CD8-positive, alpha-beta memory T cell (primary cell): ENCODE measurements at regions of chr6 and their contacts with region 1.

Region 1: GRCh38 chr6:136792410-136793262 is at the start of gene MAP3K5:
- DNase-seq: peak; percentile 88 to 96 (median 92)
- H3K4me3 ChIP-seq: peak within 1 kb of the TSS; percentile 99
- H3K4me3 Mint-ChIP-seq: peak within 1 kb of the TSS; percentile 94 to 99 (median 98)
- H3K27ac ChIP-seq: peak within 1 kb of the TSS; percentile 94
- H3K27ac Mint-ChIP-seq: peak within 1 kb of the TSS; percentile 94 to 99 (median 96)
- H3K4me1 ChIP-seq: peaks cover 39% of the 10 kb centered on the region
- H3K4me1 Mint-ChIP-seq: peaks cover 34 to 43% (median 41%) of the 10 kb centered on the region in 3 donors
- H3K27me3 ChIP-seq: no peaks in the 10 kb centered on the region
- H3K27me3 Mint-ChIP-seq: no peaks in the 10 kb centered on the region
- total RNA-seq, gene MAP3K5: 12.6 to 12.9 TPM

Region 2: DNA sequence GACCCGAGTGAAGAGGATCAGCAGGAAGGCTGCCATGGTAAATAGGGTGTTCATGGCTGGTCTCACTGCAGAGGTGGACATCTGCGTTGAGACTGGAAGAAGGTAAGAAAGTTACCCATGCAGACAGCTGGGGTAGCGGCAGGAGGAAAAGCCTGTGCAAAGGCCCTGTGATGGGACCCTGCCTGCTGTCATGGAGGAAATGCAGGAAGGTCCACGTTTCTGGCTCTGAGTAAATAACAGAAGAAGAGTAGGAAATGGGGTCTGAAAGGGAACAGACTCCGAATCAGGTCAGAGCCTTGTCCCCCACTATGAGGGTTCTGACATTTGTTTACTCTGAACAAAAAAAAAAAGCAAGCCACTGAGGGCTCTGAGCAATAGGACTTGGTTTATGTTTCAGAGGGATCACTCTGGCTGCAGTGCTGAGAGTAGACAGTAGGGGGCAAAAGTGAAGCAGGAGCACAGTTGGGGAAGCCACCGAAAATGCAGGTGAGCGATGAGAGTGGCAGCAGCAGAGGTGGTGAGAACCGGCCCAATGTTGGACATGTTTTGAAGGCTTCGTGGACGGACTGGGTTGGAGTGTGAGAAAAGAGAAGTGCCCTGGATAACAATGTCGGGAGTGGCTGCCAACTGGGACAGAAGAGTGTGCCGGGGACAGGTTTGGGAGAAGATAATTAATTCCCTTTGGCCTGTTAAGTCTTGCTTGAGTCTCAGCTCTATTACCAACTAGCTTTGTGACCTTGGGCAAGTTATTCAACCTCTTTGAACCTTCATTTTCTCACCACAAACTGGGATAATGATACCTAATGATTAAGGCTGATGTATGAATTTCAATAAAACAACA is 184.5 kb before region 1 on chr6:
- CTCF ChIA-PET with region 1: interaction called, 20 read pairs
- POLR2A ChIA-PET with region 1: no interaction called
- DNase-seq: peak; percentile 59 to 80 (median 66)
- H3K4me3 ChIP-seq: no peak overlapping the region
- H3K4me3 Mint-ChIP-seq: no peak overlapping the region
- H3K27ac ChIP-seq: no peak overlapping the region
- H3K27ac Mint-ChIP-seq: peak overlapping the region in 7 of 8 donors; percentile 7 to 80 (median 43)
- H3K4me1 ChIP-seq: no peaks in the 10 kb centered on the region
- H3K4me1 Mint-ChIP-seq: peaks cover 7 to 18% (median 8%) of the 10 kb centered on the region in 3 donors
- H3K27me3 ChIP-seq: no peaks in the 10 kb centered on the region
- H3K27me3 Mint-ChIP-seq: peaks cover 0 to 2% of the 10 kb centered on the region in 2 donors

Region 3: DNA sequence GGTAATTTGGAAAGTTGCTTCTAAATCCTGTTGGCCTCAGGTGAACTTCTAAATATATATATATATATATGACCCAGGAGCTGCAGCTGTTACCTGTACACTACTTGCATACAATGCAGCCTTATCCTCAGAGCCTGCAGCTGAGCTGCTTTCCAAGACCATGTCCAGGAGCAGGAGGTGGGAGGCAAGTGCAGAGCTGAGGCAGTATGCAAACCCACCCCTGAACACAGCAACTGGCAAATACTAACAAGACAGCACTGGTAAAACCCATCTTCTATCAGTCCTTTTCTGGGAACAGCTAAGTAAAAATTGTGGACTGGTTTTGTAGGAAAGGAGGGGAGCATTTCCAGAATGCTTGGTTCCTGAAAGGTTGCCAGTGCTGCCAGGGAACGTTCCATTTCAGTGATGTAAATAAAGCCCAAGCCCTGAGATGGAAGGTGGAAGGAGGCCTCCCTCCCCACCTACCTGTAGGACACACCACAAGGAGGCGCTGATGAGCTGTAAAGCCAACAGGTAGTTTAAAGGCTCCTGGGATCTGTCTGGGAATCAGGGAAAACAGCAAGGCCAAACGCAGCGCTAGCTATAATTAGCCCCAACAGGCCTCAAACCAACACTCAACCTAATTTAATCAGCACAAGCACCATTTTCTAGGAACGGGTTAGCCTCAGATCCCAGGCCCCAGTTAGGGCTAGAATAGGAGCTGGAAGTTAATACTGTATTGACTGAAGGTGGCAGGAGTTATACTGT is 148.6 kb before region 1 on chr6:
- CTCF ChIA-PET with region 1: interaction called, 362 read pairs
- POLR2A ChIA-PET with region 1: interaction called, 47 read pairs
- DNase-seq: peak; percentile 55 to 85 (median 73)
- H3K4me3 ChIP-seq: no peak overlapping the region
- H3K4me3 Mint-ChIP-seq: no peak overlapping the region
- H3K27ac ChIP-seq: no peak overlapping the region
- H3K27ac Mint-ChIP-seq: peak overlapping the region in 7 of 8 donors; percentile 17 to 76 (median 41)
- H3K4me1 ChIP-seq: peaks cover 17% of the 10 kb centered on the region
- H3K4me1 Mint-ChIP-seq: peaks cover 6 to 14% (median 13%) of the 10 kb centered on the region in 3 donors
- H3K27me3 ChIP-seq: no peaks in the 10 kb centered on the region
- H3K27me3 Mint-ChIP-seq: no peaks in the 10 kb centered on the region

Region 4: GRCh38 chr6:136696238-136696637 is 96.4 kb before region 1 on chr6:
- CTCF ChIA-PET with region 1: interaction called, 34 read pairs
- POLR2A ChIA-PET with region 1: interaction called, 4 read pairs
- DNase-seq: no peak
- H3K4me3 ChIP-seq: no peak overlapping the region
- H3K4me3 Mint-ChIP-seq: no peak overlapping the region
- H3K27ac ChIP-seq: no peak overlapping the region
- H3K27ac Mint-ChIP-seq: peak overlapping the region in 1 of 8 donors; percentile 22
- H3K4me1 ChIP-seq: no peaks in the 10 kb centered on the region
- H3K4me1 Mint-ChIP-seq: peaks cover 16 to 20% (median 16%) of the 10 kb centered on the region in 3 donors
- H3K27me3 ChIP-seq: no peaks in the 10 kb centered on the region
- H3K27me3 Mint-ChIP-seq: no peaks in the 10 kb centered on the region

Region 5: GRCh38 chr6:136737871-136738691 is 54.6 kb before region 1 on chr6:
- CTCF ChIA-PET with region 1: interaction called, 77 read pairs
- POLR2A ChIA-PET with region 1: interaction called, 17 read pairs
- DNase-seq: no peak
- H3K4me3 ChIP-seq: no peak overlapping the region
- H3K4me3 Mint-ChIP-seq: no peak overlapping the region
- H3K27ac ChIP-seq: peak overlapping the region; percentile 24
- H3K27ac Mint-ChIP-seq: peak overlapping the region in 4 of 8 donors; percentile 2 to 33 (median 8)
- H3K4me1 ChIP-seq: no peaks in the 10 kb centered on the region
- H3K4me1 Mint-ChIP-seq: peaks cover 60 to 80% (median 71%) of the 10 kb centered on the region in 3 donors
- H3K27me3 ChIP-seq: no peaks in the 10 kb centered on the region
- H3K27me3 Mint-ChIP-seq: no peaks in the 10 kb centered on the region

Region 6: DNA sequence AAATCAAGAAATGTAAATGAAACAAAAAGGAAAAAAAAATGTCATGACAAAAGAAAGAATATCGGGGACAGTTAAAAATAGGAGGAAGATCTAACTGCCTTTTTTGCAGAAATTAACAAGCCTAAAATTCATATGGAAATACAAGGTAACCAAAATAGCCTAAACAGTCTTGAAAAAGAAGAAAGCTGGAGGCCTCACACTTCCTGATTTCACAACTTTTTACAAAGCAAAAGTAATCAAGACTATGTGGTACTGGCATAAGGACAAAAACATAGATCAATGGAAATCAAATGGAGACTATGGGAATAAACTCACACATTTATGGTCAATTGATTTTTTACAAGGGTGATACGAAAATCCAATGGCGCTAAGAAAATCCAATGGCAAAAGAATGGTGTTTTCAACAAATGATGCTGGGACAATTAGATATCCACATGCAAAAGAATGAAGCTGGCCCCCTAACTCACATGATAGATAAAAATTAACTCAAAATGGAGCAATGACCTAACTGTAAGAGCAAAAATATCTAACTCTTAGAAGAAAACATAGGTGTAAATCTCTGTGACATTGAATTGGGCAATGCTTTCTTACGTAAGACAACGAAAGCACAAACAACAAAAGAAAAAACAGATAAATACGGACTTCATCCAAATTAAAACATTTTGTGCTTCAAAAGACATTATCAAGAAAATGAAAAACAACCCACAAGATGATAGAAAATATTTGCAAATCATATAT is 24.9 kb before region 1 on chr6:
- CTCF ChIA-PET with region 1: interaction called, 127 read pairs
- POLR2A ChIA-PET with region 1: interaction called, 27 read pairs
- DNase-seq: no peak
- H3K4me3 ChIP-seq: no peak overlapping the region
- H3K4me3 Mint-ChIP-seq: peak overlapping the region in 6 of 7 donors; percentile 2 to 73 (median 42)
- H3K27ac ChIP-seq: no peak overlapping the region
- H3K27ac Mint-ChIP-seq: peak overlapping the region; percentile 47 to 90 (median 74)
- H3K4me1 ChIP-seq: peaks cover 49% of the 10 kb centered on the region
- H3K4me1 Mint-ChIP-seq: peaks cover 72 to 92% (median 88%) of the 10 kb centered on the region in 3 donors
- H3K27me3 ChIP-seq: no peaks in the 10 kb centered on the region
- H3K27me3 Mint-ChIP-seq: no peaks in the 10 kb centered on the region

Region 7: DNA sequence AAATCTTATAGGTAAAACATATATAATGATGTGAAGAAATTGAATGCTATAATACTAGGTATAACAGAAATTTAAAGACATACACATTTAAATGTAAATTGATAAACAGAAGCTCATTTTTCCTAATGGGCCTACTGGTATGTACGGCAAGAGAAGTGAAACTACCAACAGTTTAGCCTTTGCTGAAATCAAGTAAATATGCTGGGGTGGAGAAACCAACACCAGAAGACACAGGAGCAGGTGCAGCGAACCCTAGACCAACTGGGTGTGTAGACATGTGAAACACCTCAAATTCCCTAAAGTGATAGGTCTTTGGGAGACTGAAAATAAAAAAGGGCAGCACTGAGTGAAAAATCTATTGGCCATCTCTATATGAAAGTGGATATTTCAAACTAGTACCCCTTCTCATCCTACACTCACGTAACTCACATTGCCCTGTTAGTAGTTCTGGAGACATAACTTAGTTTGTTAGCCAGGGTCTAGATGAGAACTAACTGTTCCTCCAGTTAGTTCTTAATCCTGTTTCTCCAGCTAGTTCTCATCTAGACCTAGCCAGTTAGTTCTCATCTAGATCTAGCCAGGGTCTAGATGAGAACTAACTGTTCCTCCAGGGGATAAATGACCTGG is 182.6 kb after region 1 on chr6:
- CTCF ChIA-PET with region 1: no interaction called
- POLR2A ChIA-PET with region 1: no interaction called
- DNase-seq: no peak
- H3K4me3 ChIP-seq: no peak overlapping the region
- H3K4me3 Mint-ChIP-seq: no peak overlapping the region
- H3K27ac ChIP-seq: no peak overlapping the region
- H3K27ac Mint-ChIP-seq: no peak overlapping the region
- H3K4me1 ChIP-seq: no peaks in the 10 kb centered on the region
- H3K4me1 Mint-ChIP-seq: no peaks in the 10 kb centered on the region
- H3K27me3 ChIP-seq: no peaks in the 10 kb centered on the region
- H3K27me3 Mint-ChIP-seq: peaks cover 16 to 27% of the 10 kb centered on the region in 2 donors